Dorsolateral prefrontal cortex (tissue), 120 donors: ENCODE measurements at regions of chr19 and their contacts with region 1.

Region 1: DNA sequence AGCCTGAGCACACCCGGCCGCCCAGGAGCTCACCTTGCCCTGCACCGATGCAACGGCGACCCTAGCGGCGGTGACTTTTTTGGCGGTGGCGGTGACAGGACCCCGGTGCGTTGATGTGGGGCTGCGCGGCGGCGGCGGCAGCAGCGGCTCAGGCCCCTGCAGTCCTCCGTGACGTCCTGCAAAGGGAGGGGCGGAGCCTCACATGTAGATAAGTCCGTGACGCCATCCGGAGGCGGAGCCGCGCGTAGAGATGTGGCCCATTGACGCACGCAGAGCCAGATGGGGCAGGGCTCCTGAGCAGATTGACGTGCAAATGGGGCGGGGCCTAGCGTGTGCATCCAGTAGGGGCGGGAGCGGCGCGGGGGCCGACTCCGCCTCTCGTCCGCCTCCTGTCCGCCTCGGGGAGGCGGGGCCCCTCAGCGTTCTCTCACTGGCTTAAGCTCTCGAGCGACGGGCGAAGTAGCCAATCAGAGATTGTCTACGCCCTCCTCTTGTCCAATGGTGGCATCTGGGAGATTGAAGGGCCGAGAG is at the start of gene RAB3A:
- DNase-seq: peak; percentile 100
- H3K4me3 ChIP-seq: peak within 1 kb of the TSS; percentile 65 to 96 (median 86)
- H3K27ac ChIP-seq: peak within 1 kb of the TSS; percentile 84 to 100 (median 98)
- H3K27me3 ChIP-seq: no peaks in the 10 kb centered on the region
- CTCF ChIP-seq: peak in 24 of 56 donors; percentile 5 to 49 (median 18)
- total RNA-seq, gene RAB3A: 110 to 560 (median 402) TPM

Region 2: GRCh38 chr19:18192673-18193387 is 11.1 kb before region 1 on chr19 and contains the start of gene MPV17L2:
- intact Hi-C with region 1: loop called in 1 of 2 experiments (anchors 1 kb)
- DNase-seq: peak; percentile 100
- H3K4me3 ChIP-seq: peak within 1 kb of the TSS; percentile 71 to 98 (median 87)
- H3K27ac ChIP-seq: peak within 1 kb of the TSS; percentile 72 to 99 (median 95)
- H3K27me3 ChIP-seq: no peaks in the 10 kb centered on the region
- CTCF ChIP-seq: peak in 15 of 56 donors; percentile 5 to 45 (median 11)
- total RNA-seq, gene MPV17L2: 3.8 to 12.2 (median 7.5) TPM

Region 3: GRCh38 chr19:18224525-18225354 is 20.8 kb after region 1 on chr19:
- intact Hi-C with region 1: no loop called
- DNase-seq: peak; percentile 87 to 95 (median 90)
- H3K4me3 ChIP-seq: peak overlapping the region; percentile 39 to 71 (median 58)
- H3K27ac ChIP-seq: peak overlapping the region in 43 of 59 donors; percentile 1 to 84 (median 60)
- H3K27me3 ChIP-seq: peaks cover 0 to 51% (median 17%) of the 10 kb centered on the region in 45 donors
- CTCF ChIP-seq: peak in 10 of 56 donors; percentile 4 to 36 (median 15)

Region 4: DNA sequence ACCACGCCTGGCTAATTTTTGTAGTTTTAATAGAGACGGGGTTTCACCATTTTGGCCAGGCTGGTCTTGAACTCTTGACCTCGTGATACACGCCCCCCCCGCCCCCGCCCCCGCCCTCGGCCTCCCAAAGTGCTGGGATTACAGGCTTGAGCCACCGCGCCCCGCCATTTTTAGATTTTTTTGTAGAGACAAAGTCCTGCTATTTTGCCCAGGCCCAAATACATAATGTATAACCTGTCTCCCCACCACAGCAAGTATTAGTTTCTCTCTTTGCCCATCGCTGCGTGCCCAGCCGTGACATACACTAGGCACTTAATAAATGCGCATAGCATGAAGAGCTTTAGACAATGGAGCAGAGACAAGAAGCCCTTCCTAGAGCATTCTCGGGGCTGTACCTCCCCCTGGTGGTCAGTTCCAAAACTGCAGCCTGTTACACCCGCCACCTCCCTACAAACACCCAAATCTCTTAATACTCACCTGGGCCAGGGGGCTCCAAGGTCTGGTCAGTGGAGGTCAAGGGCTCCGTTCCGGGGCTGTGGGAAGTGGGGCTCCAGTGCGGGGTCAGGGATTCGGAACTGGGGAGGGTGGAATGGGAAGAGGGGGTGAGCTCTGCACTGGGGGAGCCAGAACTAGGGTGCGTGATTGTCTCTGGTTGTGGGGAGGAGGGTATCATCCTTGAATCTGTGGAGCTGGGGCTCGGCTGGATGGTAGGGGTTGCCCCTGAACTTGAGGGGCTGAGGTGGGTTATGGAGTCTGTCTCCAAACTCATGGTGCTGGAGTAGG is 47.9 kb after region 1 on chr19:
- intact Hi-C with region 1: loop called (anchors 2 to 5 kb)
- DNase-seq: peak in 9 of 10 donors; percentile 64 to 85 (median 75)
- H3K4me3 ChIP-seq: peak overlapping the region in 2 of 59 donors; percentile 14 to 17
- H3K27ac ChIP-seq: no peak overlapping the region
- H3K27me3 ChIP-seq: no peaks in the 10 kb centered on the region
- CTCF ChIP-seq: peak; percentile 77 to 99 (median 94)

Region 5: DNA sequence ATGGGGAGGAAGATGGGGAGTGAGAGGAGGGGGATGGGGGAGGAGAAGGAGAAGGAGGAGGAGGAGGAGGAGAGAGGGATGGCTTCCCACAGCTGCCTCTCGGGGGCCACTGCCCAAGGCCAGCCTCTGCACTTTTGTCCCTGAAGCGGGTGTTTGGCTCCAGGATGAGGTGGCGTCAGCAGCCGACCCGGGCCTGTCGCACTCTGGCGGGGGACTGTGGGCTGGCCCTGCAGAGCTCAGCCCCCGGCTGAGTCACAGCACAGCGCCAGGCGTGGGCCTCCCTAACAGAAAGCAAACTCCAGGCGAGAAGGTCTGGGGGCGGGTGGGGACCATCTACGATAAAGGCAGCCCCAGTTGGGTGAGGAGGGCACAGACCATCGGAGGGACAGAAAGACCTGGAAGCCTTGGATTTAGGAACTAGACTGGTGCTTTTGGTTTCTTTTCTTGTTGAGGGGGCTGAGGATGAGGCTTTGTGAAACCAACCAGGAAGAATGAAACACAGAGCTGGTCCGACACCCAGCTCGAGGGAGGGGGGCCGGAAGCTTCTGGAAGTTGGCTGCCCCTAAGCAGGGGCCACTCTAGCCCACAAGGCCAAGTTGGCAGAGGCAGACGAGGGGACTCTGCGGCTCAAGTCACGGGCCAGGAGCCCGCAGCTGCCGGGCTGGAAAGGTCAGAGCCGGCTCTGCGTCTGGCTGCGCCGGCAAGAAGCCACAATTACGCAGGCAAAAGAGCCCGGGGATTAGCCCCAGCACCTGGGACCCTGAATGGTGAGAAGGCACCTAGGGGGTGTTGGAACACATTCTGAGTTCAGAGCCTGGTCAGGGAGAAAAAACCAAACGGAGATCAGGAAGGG is 100.8 kb after region 1 on chr19:
- intact Hi-C with region 1: no loop called
- DNase-seq: peak; percentile 42 to 93 (median 79)
- H3K4me3 ChIP-seq: peak overlapping the region; percentile 7 to 65 (median 48)
- H3K27ac ChIP-seq: peak overlapping the region; percentile 68 to 100 (median 98)
- H3K27me3 ChIP-seq: no peaks in the 10 kb centered on the region
- CTCF ChIP-seq: peak in 9 of 56 donors; percentile 3 to 32 (median 11)

Region 6: DNA sequence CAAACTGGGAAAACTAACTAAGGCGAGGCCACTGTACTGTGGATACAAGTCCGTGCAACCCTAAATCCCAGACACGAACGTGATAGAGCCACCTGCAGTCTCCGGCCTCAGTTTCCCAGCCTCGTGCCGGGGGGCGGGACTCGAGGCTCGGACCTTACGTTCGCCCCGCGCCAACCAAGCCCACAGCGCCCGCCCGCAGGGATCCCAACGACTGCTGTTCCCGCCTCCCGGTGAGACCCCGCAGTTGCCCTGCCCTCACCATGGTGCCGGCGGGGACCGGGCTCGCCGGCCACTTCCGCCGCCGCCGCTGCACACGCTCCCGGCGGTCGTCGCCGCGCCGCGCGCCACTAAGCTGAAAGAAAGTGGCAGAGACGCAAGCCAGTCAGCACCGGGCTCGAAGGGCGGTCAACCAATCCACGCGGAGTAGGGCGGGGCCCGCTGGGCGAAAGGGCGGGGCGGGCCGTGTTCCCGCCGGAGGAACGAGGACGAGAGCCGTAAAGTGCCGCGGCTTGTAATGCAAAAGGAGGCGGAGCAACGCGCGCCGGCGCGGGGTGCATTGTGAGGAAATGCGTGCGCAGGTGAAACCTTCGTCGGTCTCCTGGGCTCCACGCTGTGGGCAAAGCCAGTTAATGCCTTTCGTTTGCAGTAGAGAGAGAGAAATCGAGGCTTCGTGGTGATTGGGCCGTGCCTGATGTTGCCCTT is 119.0 kb after region 1 on chr19 and contains the start of gene LSM4:
- intact Hi-C with region 1: loop called in 1 of 2 experiments (anchors 5 kb)
- DNase-seq: peak; percentile 96 to 99 (median 98)
- H3K4me3 ChIP-seq: peak within 1 kb of the TSS; percentile 60 to 96 (median 84)
- H3K27ac ChIP-seq: peak within 1 kb of the TSS; percentile 79 to 99 (median 94)
- H3K27me3 ChIP-seq: no peaks in the 10 kb centered on the region
- CTCF ChIP-seq: peak in 40 of 56 donors; percentile 7 to 54 (median 30)
- total RNA-seq, gene LSM4: 46.4 to 115 (median 74.8) TPM

Region 7: GRCh38 chr19:18419195-18419698 is 215.3 kb after region 1 on chr19 and contains the start of gene SSBP4:
- intact Hi-C with region 1: loop called (anchors 5 kb)
- DNase-seq: peak in 6 of 10 donors; percentile 39 to 84 (median 55)
- H3K4me3 ChIP-seq: peak within 1 kb of the TSS; percentile 44 to 86 (median 68)
- H3K27ac ChIP-seq: peak within 1 kb of the TSS in 58 of 59 donors; percentile 22 to 97 (median 92)
- H3K27me3 ChIP-seq: peaks cover 0 to 17% (median 0%) of the 10 kb centered on the region in 45 donors
- CTCF ChIP-seq: peak in 27 of 56 donors; percentile 5 to 61 (median 36)
- total RNA-seq, gene SSBP4: 42.5 to 168 (median 93.8) TPM